Posterior vena cava (tissue), 2 donors: ENCODE measurements at regions of chr1 and their contacts with region 1.

Region 1: GRCh38 chr1:101013776-101014175 is 11.8 kb downstream of the DPH5 start:
- DNase-seq: no peak

Region 2: GRCh38 chr1:100023482-100023881 is 990.3 kb before region 1 on chr1:
- intact Hi-C with region 1: no loop called
- DNase-seq: no peak

Region 3: GRCh38 chr1:100538913-100539835 is 474.6 kb before region 1 on chr1:
- intact Hi-C with region 1: loop called in 1 of 2 experiments (anchors 5 kb)
- DNase-seq: peak; percentile 82

Region 4: DNA sequence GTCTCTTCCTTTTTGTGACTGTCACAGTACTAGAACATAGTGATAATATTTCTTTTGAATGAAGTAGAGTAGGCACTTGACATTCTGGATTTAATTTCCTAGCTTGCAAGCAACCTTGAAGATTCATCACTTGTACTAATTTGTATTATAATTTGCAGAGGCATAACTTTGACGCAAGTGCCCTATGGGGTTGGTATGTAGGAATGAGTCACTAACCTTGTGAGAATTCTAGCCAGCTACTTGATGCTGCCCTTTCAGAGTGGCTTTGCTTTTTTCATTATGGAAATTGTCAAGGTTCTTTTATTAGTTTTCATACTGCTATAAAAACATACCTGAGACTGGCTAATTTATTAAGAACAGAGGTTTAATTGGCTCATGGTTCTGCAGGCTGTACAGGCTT is 25.5 kb after region 1 on chr1:
- intact Hi-C with region 1: loop called in 1 of 2 experiments (anchors 2 kb)
- DNase-seq: no peak